Activated CD8-positive, alpha-beta T cell treated with anti-CD3 and anti-CD28 coated beads, Interleukin-2, amount 10 ng/mL, durations not matched to agents 7 days and 5 days (primary cell): ENCODE measurements at regions of chr17 and their contacts with region 1.

Region 1: GRCh38 chr17:43483674-43484372 is at the start of gene DHX8:
- DNase-seq: peak; percentile 98
- ATAC-seq: peak; percentile 99
- H3K4me3 Mint-ChIP-seq: peak within 1 kb of the TSS; percentile 100
- H3K27ac Mint-ChIP-seq: peak within 1 kb of the TSS; percentile 99
- H3K4me1 Mint-ChIP-seq: peaks cover 29% of the 10 kb centered on the region
- H3K27me3 Mint-ChIP-seq: peaks cover 3% of the 10 kb centered on the region
- total RNA-seq, gene DHX8: 52.7 to 56.4 TPM

Region 2: DNA sequence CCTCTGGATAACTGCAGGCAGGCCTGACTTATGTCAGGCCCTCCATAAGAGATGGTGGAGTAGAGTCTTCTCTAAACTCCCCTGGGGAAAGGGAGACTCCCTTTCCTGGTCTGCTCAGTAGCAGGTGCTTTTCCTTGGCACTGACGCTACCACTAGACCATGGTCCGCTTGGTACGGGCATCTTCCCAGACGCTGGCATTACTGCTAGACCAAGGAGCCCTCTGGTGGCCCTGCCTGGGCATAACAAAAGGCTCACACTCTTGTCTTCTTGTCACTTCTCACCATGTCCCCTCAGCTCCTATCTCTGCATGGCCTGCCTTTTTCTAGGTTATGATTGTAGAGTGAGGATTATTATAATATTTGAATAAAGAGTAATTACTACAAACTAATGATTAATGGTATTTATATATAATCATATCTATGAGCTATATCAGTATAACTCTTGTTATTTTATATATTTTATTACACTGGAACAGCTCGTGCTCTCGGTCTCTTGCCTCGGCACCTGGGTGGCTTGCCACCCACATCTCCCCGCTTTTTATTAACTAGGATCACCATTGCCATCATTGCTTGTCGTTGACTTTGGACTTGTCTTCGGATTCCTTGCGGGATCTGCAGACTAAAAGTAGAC is 144.8 kb before region 1 on chr17:
- CTCF ChIA-PET with region 1: interaction called, 18 read pairs
- POLR2A ChIA-PET with region 1: no interaction called
- DNase-seq: peak; percentile 73
- ATAC-seq: no peak
- H3K4me3 Mint-ChIP-seq: no peak overlapping the region
- H3K27ac Mint-ChIP-seq: no peak overlapping the region
- H3K4me1 Mint-ChIP-seq: peaks cover 15% of the 10 kb centered on the region
- H3K27me3 Mint-ChIP-seq: peaks cover 12% of the 10 kb centered on the region

Region 3: DNA sequence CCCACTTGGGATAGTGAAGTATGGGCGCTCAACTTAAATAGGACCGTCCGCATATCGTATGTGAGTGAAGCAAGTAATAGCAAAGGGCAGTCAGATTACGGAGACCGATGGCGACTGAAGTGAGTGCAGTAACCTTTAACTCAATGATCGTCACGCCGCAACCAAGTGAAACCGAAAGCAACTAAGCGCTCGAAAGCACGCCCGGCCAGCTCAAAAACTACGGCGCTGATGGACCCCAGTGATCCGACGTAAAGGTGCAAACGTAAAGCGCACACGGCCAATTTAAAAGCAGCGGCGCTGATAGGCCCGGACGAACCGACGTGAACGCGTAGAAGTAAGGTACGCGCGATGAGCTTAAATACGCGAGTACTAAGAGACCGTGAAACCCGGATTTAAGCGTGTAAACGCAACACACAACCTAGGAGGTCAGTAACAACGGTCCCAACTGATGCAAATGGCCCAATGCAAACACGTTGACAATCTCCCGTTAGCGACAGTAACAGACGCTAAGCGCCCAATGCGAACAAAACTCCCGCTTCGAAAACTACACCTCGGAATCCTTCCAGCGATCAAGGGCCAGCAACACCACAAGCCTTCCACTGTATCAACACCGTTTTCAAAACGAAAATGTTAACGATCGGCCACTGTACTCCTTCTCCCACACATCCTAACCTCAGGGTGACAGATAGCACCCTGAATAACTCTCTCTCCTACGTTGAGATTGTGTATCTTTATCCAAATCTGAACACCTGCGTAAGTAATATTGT is 122.9 kb before region 1 on chr17:
- CTCF ChIA-PET with region 1: interaction called, 35 read pairs
- POLR2A ChIA-PET with region 1: interaction called, 63 read pairs
- DNase-seq: peak; percentile 97
- ATAC-seq: peak; percentile 83
- H3K4me3 Mint-ChIP-seq: peak overlapping the region; percentile 91
- H3K27ac Mint-ChIP-seq: peak overlapping the region; percentile 100
- H3K4me1 Mint-ChIP-seq: peaks cover 40% of the 10 kb centered on the region
- H3K27me3 Mint-ChIP-seq: no peaks in the 10 kb centered on the region

Region 4: GRCh38 chr17:43388359-43389045 is 95.3 kb before region 1 on chr17:
- CTCF ChIA-PET with region 1: interaction called, 393 read pairs
- POLR2A ChIA-PET with region 1: interaction called, 43 read pairs
- DNase-seq: peak; percentile 92
- ATAC-seq: peak; percentile 77
- H3K4me3 Mint-ChIP-seq: peak overlapping the region; percentile 82
- H3K27ac Mint-ChIP-seq: peak overlapping the region; percentile 95
- H3K4me1 Mint-ChIP-seq: peaks cover 27% of the 10 kb centered on the region
- H3K27me3 Mint-ChIP-seq: no peaks in the 10 kb centered on the region

Region 5: GRCh38 chr17:43406676-43407645 is 76.9 kb before region 1 on chr17:
- CTCF ChIA-PET with region 1: interaction called, 11 read pairs
- POLR2A ChIA-PET with region 1: no interaction called
- DNase-seq: no peak
- ATAC-seq: no peak
- H3K4me3 Mint-ChIP-seq: no peak overlapping the region
- H3K27ac Mint-ChIP-seq: no peak overlapping the region
- H3K4me1 Mint-ChIP-seq: no peaks in the 10 kb centered on the region
- H3K27me3 Mint-ChIP-seq: peaks cover 7% of the 10 kb centered on the region

Region 6: DNA sequence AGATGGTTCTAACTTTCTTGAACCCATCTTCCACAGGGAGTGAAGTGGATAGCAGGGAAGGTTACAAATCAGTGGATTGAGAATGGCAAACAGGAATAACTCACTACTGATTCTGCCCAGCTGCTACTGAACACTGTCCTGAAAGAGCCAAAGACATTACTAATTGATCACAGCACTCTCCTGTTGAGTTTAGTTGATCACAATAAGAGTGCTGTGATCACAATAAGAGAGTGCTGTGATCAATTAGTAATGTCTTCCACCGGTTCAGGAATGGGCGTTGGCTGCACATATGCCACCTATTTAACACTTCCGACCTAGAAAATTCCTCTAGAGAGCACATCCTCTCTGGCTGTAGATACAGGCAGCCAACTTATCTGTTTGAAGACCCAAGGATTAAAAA is 307.8 kb after region 1 on chr17:
- CTCF ChIA-PET with region 1: no interaction called
- POLR2A ChIA-PET with region 1: no interaction called
- DNase-seq: no peak
- ATAC-seq: no peak
- H3K4me3 Mint-ChIP-seq: no peak overlapping the region
- H3K27ac Mint-ChIP-seq: no peak overlapping the region
- H3K4me1 Mint-ChIP-seq: no peaks in the 10 kb centered on the region
- H3K27me3 Mint-ChIP-seq: peaks cover 40% of the 10 kb centered on the region